Naive thymus-derived CD4-positive, alpha-beta T cell (primary cell): ENCODE measurements at regions of chr1 and their contacts with region 1.

Region 1: DNA sequence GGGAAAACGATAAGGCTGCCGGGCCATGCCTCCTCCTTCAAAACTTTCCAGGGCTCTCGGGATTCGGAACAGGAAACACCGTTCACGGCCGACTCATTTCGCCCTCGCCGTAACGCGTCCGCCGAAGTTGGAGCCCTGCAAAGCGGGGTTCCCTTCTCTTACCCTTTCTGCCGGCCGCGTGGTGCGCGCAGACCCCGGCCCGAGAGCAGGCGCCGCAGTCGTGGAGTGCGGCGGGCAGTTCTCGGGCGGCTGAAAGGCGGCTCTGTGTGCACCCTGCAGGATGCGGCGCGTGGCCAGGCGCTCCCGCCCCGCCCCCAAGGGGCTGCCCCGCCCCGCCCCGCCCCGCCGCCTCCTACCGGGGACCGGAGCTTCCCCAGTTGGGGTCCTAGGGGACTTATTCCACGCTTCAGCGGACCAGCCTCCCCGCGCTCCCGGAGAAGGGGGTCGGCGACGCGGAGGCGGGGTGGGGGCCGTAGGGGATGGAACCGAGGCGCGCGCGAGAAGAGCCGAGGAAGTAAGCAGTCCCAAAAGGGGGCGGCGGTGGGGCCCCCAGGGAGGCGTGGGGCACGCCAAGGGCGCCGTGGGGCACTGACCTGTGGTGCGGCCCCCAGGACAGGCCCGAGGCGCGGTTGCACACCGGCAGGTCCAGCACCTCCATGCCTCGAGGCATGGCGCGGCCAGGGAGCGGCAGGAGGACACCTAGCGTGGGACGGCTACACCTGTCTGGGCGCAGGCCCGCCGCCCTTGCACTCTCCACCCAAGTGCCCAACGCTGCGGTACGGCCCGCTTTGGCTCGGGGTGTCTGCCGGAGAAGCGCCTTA is at the start of gene MCOLN2:
- DNase-seq: peak; percentile 7 to 69 (median 37)
- ATAC-seq: peak; percentile 89
- H3K4me3 ChIP-seq: peak within 1 kb of the TSS; percentile 77
- H3K4me3 Mint-ChIP-seq: peak within 1 kb of the TSS; percentile 80 to 95 (median 86)
- H3K27ac ChIP-seq: no peak within 1 kb of the TSS
- H3K27ac Mint-ChIP-seq: peak within 1 kb of the TSS in 4 of 9 donors; percentile 33 to 85 (median 66)
- H3K4me1 ChIP-seq: peaks cover 17 to 26% of the 10 kb centered on the region in 2 donors
- H3K4me1 Mint-ChIP-seq: peaks cover 13 to 57% (median 16%) of the 10 kb centered on the region in 7 donors
- H3K27me3 ChIP-seq: peaks cover 0 to 13% of the 10 kb centered on the region in 2 donors
- H3K27me3 Mint-ChIP-seq: peaks cover 28 to 55% (median 35%) of the 10 kb centered on the region in 5 donors
- total RNA-seq, gene MCOLN2: 2.5 to 35.7 (median 3.1) TPM

Region 2: DNA sequence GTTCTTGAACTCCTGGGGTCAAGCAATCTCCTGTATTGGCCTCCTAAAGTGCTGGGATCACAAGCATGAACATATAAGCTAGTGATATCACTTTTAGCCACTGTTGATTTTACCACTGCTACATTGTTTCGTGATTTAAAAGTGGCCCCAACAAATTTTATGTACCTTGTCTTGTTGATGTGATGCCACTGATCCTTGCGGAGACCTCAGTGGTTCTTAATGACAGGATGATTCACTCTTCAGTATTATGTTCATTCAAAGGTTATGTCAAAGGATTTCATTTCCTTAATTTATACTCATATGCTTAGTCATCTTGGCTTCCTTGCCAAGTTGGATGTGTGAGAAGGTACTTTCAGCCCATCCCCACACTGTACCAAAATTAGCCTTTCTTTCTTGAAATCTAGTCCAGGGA is 840.8 kb before region 1 on chr1:
- CTCF ChIA-PET with region 1: no interaction called
- POLR2A ChIA-PET with region 1: no interaction called
- intact Hi-C with region 1: no loop called
- DNase-seq: no peak
- ATAC-seq: peak; percentile 67
- H3K4me3 ChIP-seq: no peak overlapping the region
- H3K4me3 Mint-ChIP-seq: peak overlapping the region in 9 of 10 donors; percentile 6 to 65 (median 55)
- H3K27ac ChIP-seq: no peak overlapping the region
- H3K27ac Mint-ChIP-seq: peak overlapping the region in 3 of 9 donors; percentile 10 to 59 (median 39)
- H3K4me1 ChIP-seq: peaks cover 24 to 62% of the 10 kb centered on the region in 2 donors
- H3K4me1 Mint-ChIP-seq: peaks cover 57 to 99% (median 95%) of the 10 kb centered on the region in 7 donors
- H3K27me3 ChIP-seq: no peaks in the 10 kb centered on the region
- H3K27me3 Mint-ChIP-seq: no peaks in the 10 kb centered on the region

Region 3: GRCh38 chr1:84781946-84782771 is 214.9 kb before region 1 on chr1:
- CTCF ChIA-PET with region 1: no interaction called
- POLR2A ChIA-PET with region 1: no interaction called
- intact Hi-C with region 1: no loop called
- DNase-seq: peak; percentile 63 to 82 (median 75)
- ATAC-seq: peak; percentile 93
- H3K4me3 ChIP-seq: peak overlapping the region; percentile 23
- H3K4me3 Mint-ChIP-seq: peak overlapping the region; percentile 60 to 89 (median 84)
- H3K27ac ChIP-seq: peak overlapping the region; percentile 26
- H3K27ac Mint-ChIP-seq: peak overlapping the region in 8 of 9 donors; percentile 48 to 88 (median 78)
- H3K4me1 ChIP-seq: peaks cover 0 to 14% of the 10 kb centered on the region in 2 donors
- H3K4me1 Mint-ChIP-seq: peaks cover 17 to 35% (median 30%) of the 10 kb centered on the region in 7 donors
- H3K27me3 ChIP-seq: no peaks in the 10 kb centered on the region
- H3K27me3 Mint-ChIP-seq: peaks cover 0 to 7% (median 0%) of the 10 kb centered on the region in 5 donors

Region 4: GRCh38 chr1:84853741-84854721 is 143.0 kb before region 1 on chr1:
- CTCF ChIA-PET with region 1: no interaction called
- POLR2A ChIA-PET with region 1: no interaction called
- intact Hi-C with region 1: loop called in 1 of 2 experiments (anchors 10 kb)
- DNase-seq: peak in 8 of 9 donors; percentile 16 to 56 (median 41)
- ATAC-seq: peak; percentile 96
- H3K4me3 ChIP-seq: no peak overlapping the region
- H3K4me3 Mint-ChIP-seq: peak overlapping the region in 6 of 10 donors; percentile 0 to 70 (median 14)
- H3K27ac ChIP-seq: peak overlapping the region; percentile 5
- H3K27ac Mint-ChIP-seq: peak overlapping the region; percentile 54 to 98 (median 87)
- H3K4me1 ChIP-seq: peaks cover 14 to 17% of the 10 kb centered on the region in 2 donors
- H3K4me1 Mint-ChIP-seq: peaks cover 23 to 52% (median 45%) of the 10 kb centered on the region in 7 donors
- H3K27me3 ChIP-seq: no peaks in the 10 kb centered on the region
- H3K27me3 Mint-ChIP-seq: peaks cover 0 to 8% (median 0%) of the 10 kb centered on the region in 5 donors

Region 5: GRCh38 chr1:84959294-84959693 is 37.8 kb before region 1 on chr1:
- CTCF ChIA-PET with region 1: no interaction called
- POLR2A ChIA-PET with region 1: no interaction called
- intact Hi-C with region 1: loop called in 1 of 2 experiments (anchors 1 kb)
- DNase-seq: peak in 1 of 9 donors; percentile 42
- ATAC-seq: peak; percentile 46
- H3K4me3 ChIP-seq: no peak overlapping the region
- H3K4me3 Mint-ChIP-seq: peak overlapping the region in 1 of 10 donors; percentile 12
- H3K27ac ChIP-seq: no peak overlapping the region
- H3K27ac Mint-ChIP-seq: peak overlapping the region in 2 of 9 donors; percentile 10 to 23
- H3K4me1 ChIP-seq: no peaks in the 10 kb centered on the region
- H3K4me1 Mint-ChIP-seq: peaks cover 0 to 10% (median 0%) of the 10 kb centered on the region in 7 donors
- H3K27me3 ChIP-seq: no peaks in the 10 kb centered on the region
- H3K27me3 Mint-ChIP-seq: peaks cover 0 to 6% (median 3%) of the 10 kb centered on the region in 5 donors

Region 6: DNA sequence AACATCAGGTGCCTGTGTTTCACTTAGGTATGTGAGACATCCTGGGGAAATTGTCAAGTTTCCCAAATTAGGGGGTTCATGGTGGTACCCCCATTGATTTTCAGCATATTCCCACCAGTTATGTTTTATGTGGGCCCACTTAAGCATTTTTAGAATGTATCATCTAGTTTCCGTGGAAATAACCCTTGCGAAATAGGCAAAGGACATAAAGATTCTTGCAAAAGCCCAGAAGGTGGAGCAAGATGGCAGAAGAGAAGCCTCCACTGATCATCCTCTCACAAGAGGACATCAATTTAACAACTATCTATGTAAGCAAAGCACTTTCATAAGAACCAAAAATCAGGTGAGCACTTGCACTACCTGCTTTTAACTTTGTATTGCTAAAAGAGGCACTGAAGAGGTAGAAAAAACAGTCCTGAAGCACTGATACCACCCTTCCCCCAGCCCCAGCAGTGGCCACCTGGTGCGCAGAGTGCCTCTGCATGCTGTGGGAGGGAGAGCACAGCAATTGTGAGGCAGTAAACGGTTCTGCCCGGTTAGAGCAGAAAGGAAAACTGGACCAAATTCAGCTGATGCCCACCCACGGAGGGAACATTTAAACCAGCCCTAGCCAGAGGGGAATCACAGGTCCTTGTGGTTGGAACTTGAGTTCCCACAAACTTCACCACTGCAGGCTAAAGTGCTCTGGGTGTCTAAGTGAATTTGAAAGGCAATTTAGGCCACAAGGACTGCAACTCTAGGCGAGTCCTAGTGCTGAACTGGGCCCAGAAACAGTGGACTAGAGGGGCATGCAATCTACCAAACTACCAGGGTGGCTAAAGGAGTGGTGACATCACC is 23.3 kb before region 1 on chr1:
- CTCF ChIA-PET with region 1: no interaction called
- POLR2A ChIA-PET with region 1: no interaction called
- intact Hi-C with region 1: loop called in 1 of 2 experiments (anchors 2 kb)
- DNase-seq: peak in 1 of 9 donors; percentile 49
- ATAC-seq: no peak
- H3K4me3 ChIP-seq: no peak overlapping the region
- H3K4me3 Mint-ChIP-seq: no peak overlapping the region
- H3K27ac ChIP-seq: no peak overlapping the region
- H3K27ac Mint-ChIP-seq: peak overlapping the region in 1 of 9 donors; percentile 72
- H3K4me1 ChIP-seq: peaks cover 0 to 23% of the 10 kb centered on the region in 2 donors
- H3K4me1 Mint-ChIP-seq: peaks cover 0 to 69% (median 0%) of the 10 kb centered on the region in 7 donors
- H3K27me3 ChIP-seq: no peaks in the 10 kb centered on the region
- H3K27me3 Mint-ChIP-seq: peaks cover 0 to 21% (median 0%) of the 10 kb centered on the region in 5 donors

Region 7: GRCh38 chr1:85027242-85027983 is 30.4 kb after region 1 on chr1:
- CTCF ChIA-PET with region 1: interaction called, 3 read pairs
- POLR2A ChIA-PET with region 1: no interaction called
- intact Hi-C with region 1: loop called in 1 of 2 experiments (anchors 1 kb)
- DNase-seq: peak in 7 of 9 donors; percentile 12 to 56 (median 34)
- ATAC-seq: peak; percentile 94
- H3K4me3 ChIP-seq: peak overlapping the region; percentile 33
- H3K4me3 Mint-ChIP-seq: peak overlapping the region in 9 of 10 donors; percentile 19 to 70 (median 49)
- H3K27ac ChIP-seq: peak overlapping the region; percentile 5
- H3K27ac Mint-ChIP-seq: peak overlapping the region; percentile 43 to 91 (median 84)
- H3K4me1 ChIP-seq: peaks cover 0 to 7% of the 10 kb centered on the region in 2 donors
- H3K4me1 Mint-ChIP-seq: peaks cover 7 to 13% (median 10%) of the 10 kb centered on the region in 7 donors
- H3K27me3 ChIP-seq: no peaks in the 10 kb centered on the region
- H3K27me3 Mint-ChIP-seq: no peaks in the 10 kb centered on the region

Region 8: DNA sequence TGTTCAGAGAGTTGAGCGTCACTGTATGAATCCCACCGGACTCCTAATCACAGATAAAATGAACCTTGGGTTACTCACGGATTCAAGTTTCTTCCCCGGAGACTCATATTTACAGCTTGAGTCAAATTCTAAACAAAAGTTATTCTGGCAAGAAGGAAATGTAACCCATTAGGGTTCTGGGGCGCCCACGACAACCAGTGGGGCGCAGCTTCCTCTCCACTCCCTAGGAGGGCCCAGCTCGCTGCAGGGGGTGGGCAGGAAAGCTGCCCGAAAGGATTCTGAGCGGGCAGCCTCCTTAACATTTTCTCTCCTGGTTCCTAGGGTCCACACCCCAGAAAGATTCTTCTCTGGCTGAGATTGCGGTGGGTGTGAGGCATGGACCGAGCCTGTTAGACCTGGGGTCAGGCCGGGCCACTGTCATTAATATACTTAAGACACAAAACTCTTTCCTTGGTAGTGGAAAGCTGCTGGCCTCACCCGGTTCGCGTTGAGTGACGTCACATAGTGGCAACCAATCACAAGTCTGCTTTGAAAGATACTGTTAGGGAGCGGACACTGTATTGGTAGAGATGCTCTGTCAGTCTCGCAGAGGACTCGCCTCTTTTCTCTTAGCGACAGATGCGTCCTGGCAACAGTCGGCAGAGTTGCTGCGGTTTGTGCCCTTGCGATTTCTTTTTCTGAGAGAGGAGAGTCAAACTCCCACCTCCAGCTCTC is 64.8 kb after region 1 on chr1:
- CTCF ChIA-PET with region 1: no interaction called
- POLR2A ChIA-PET with region 1: no interaction called
- intact Hi-C with region 1: loop called (anchors 2 to 5 kb)
- DNase-seq: peak; percentile 49 to 93 (median 86)
- ATAC-seq: peak; percentile 99
- H3K4me3 ChIP-seq: peak overlapping the region; percentile 57
- H3K4me3 Mint-ChIP-seq: peak overlapping the region; percentile 79 to 93 (median 88)
- H3K27ac ChIP-seq: peak overlapping the region; percentile 24
- H3K27ac Mint-ChIP-seq: peak overlapping the region; percentile 57 to 96 (median 92)
- H3K4me1 ChIP-seq: peaks cover 4 to 6% of the 10 kb centered on the region in 2 donors
- H3K4me1 Mint-ChIP-seq: peaks cover 11 to 21% (median 14%) of the 10 kb centered on the region in 7 donors
- H3K27me3 ChIP-seq: no peaks in the 10 kb centered on the region
- H3K27me3 Mint-ChIP-seq: peaks cover 3 to 39% (median 13%) of the 10 kb centered on the region in 5 donors

Region 9: GRCh38 chr1:85607126-85607912 is 610.3 kb after region 1 on chr1:
- CTCF ChIA-PET with region 1: no interaction called
- POLR2A ChIA-PET with region 1: no interaction called
- intact Hi-C with region 1: no loop called
- DNase-seq: no peak
- ATAC-seq: no peak
- H3K4me3 ChIP-seq: no peak overlapping the region
- H3K4me3 Mint-ChIP-seq: no peak overlapping the region
- H3K27ac ChIP-seq: no peak overlapping the region
- H3K27ac Mint-ChIP-seq: no peak overlapping the region
- H3K4me1 ChIP-seq: no peaks in the 10 kb centered on the region
- H3K4me1 Mint-ChIP-seq: no peaks in the 10 kb centered on the region
- H3K27me3 ChIP-seq: no peaks in the 10 kb centered on the region
- H3K27me3 Mint-ChIP-seq: peaks cover 0 to 2% (median 0%) of the 10 kb centered on the region in 5 donors